GM10248 (cell line): ENCODE measurements at regions of chr17 and their contacts with region 1.

Region 1: GRCh38 chr17:17496189-17497064 is at the start of gene RASD1:
- DNase-seq: peak; percentile 95
- CTCF ChIP-seq: peak; percentile 93

Region 2: DNA sequence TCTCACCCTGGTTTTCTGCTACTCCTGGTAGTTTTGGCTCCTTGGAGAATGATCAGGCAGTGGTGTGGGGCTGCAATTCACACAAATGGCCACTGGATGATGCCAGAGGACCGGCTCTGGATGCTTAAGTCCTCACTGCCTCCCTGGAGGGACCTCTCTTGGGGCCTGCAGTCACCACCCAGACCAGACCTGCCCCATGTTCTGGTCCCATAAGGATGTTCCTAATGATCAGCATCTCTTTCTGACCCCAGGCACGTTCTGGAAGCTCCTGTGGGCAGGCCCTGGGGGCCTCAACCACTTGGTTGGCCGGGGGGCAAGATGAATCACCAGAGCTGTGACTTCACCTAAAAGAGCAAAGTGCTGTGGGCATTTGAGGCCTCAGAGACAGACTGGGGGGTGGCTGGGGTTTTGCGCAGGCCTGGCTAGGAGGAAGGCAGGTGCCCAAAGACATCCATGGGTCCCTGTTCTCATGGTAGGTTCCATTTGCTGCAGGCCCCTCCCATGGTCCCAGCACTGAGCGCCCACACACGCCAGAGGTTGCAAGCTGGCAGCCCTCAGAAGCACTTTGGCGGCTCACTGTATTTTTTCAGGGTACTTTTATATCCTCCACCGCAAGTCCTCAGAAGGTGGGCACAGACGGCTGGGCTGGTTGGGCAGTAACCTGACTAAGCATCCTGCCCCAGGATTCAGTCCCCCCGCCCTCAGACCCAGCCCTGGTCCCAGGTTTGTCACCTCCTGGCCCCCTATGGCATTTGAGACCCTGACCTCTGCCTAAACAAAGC is 140.1 kb before region 1 on chr17:
- CTCF ChIA-PET with region 1: interaction called, 26 read pairs
- POLR2A ChIA-PET with region 1: no interaction called
- DNase-seq: peak; percentile 85
- CTCF ChIP-seq: peak; percentile 98

Region 3: DNA sequence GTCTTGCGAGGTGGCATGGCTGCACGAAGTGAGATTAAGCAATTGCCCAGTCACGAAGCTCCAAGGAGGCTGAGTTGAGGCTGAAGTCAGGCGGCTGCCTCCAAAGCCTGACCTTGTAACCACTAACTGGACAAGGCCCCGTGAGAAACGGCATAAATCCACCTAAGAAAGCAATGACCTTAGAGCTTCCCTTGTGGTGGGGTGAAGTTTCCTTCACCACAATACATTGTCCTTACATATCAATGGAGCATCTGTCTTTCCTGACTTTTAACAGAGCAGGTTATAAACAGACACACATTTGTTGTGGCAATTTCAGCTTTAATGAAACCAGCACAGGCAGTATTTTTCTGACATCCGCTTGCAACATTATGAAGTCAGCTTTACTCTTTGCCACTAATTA is 22.1 kb before region 1 on chr17:
- CTCF ChIA-PET with region 1: interaction called, 20 read pairs
- POLR2A ChIA-PET with region 1: interaction called, 5 read pairs
- DNase-seq: no peak
- CTCF ChIP-seq: no peak

Region 4: GRCh38 chr17:17511881-17512858 is 15.7 kb after region 1 on chr17:
- CTCF ChIA-PET with region 1: interaction called, 32 read pairs
- POLR2A ChIA-PET with region 1: no interaction called
- DNase-seq: no peak
- CTCF ChIP-seq: no peak

Region 5: GRCh38 chr17:17613708-17614114 is 117.3 kb after region 1 on chr17:
- CTCF ChIA-PET with region 1: interaction called, 21 read pairs
- POLR2A ChIA-PET with region 1: no interaction called
- DNase-seq: peak; percentile 64
- CTCF ChIP-seq: peak; percentile 55

Region 6: GRCh38 chr17:17672453-17673368 is 176.3 kb after region 1 on chr17:
- CTCF ChIA-PET with region 1: interaction called, 10 read pairs
- POLR2A ChIA-PET with region 1: no interaction called
- DNase-seq: no peak
- CTCF ChIP-seq: no peak